T-cell (primary cell): ENCODE measurements at regions of chr17 and their contacts with region 1.

Region 1: GRCh38 chr17:7136266-7136877 is 21.8 kb upstream of the ASGR2 start:
- DNase-seq: peak; percentile 43 to 92 (median 74)
- ATAC-seq: peak in 2 of 4 experiments; percentile 39 to 46
- H3K4me3 ChIP-seq: no peak overlapping the region
- H3K4me3 Mint-ChIP-seq: no peak overlapping the region
- H3K27ac ChIP-seq: no peak overlapping the region
- H3K27ac Mint-ChIP-seq: peak overlapping the region in 1 of 2 donors; percentile 49
- H3K4me1 ChIP-seq: peaks cover 6 to 24% of the 10 kb centered on the region in 2 experiments
- H3K4me1 Mint-ChIP-seq: peaks cover 21 to 24% (median 21%) of the 10 kb centered on the region in 3 donors
- H3K27me3 ChIP-seq: peaks cover 0 to 49% of the 10 kb centered on the region in 2 experiments
- H3K27me3 Mint-ChIP-seq: peaks cover 0 to 10% of the 10 kb centered on the region in 2 donors

Region 2: GRCh38 chr17:6872137-6872808 is 264.1 kb before region 1 on chr17:
- CTCF ChIA-PET with region 1: no interaction called
- POLR2A ChIA-PET with region 1: no interaction called
- DNase-seq: no peak
- ATAC-seq: no peak
- H3K4me3 ChIP-seq: no peak overlapping the region
- H3K4me3 Mint-ChIP-seq: no peak overlapping the region
- H3K27ac ChIP-seq: no peak overlapping the region
- H3K27ac Mint-ChIP-seq: no peak overlapping the region
- H3K4me1 ChIP-seq: no peaks in the 10 kb centered on the region
- H3K4me1 Mint-ChIP-seq: no peaks in the 10 kb centered on the region
- H3K27me3 ChIP-seq: peaks cover 0 to 3% of the 10 kb centered on the region in 2 experiments
- H3K27me3 Mint-ChIP-seq: peaks cover 19 to 23% of the 10 kb centered on the region in 2 donors

Region 3: GRCh38 chr17:7029659-7030058 is 106.7 kb before region 1 on chr17:
- CTCF ChIA-PET with region 1: no interaction called
- POLR2A ChIA-PET with region 1: no interaction called
- DNase-seq: peak in 8 of 35 experiments; percentile 28 to 62 (median 38)
- ATAC-seq: peak; percentile 67 to 89 (median 76)
- H3K4me3 ChIP-seq: peak overlapping the region; percentile 8 to 15
- H3K4me3 Mint-ChIP-seq: peak overlapping the region; percentile 52 to 75 (median 57)
- H3K27ac ChIP-seq: peak overlapping the region; percentile 32
- H3K27ac Mint-ChIP-seq: peak overlapping the region; percentile 75 to 86
- H3K4me1 ChIP-seq: peaks cover 35 to 50% of the 10 kb centered on the region in 2 experiments
- H3K4me1 Mint-ChIP-seq: peaks cover 40 to 57% (median 56%) of the 10 kb centered on the region in 3 donors
- H3K27me3 ChIP-seq: no peaks in the 10 kb centered on the region
- H3K27me3 Mint-ChIP-seq: no peaks in the 10 kb centered on the region

Region 4: GRCh38 chr17:7060165-7060891 is 76.0 kb before region 1 on chr17:
- CTCF ChIA-PET with region 1: interaction called in 1 of 2 experiments, 25 read pairs
- POLR2A ChIA-PET with region 1: no interaction called
- DNase-seq: no peak
- ATAC-seq: peak in 1 of 4 experiments; percentile 43
- H3K4me3 ChIP-seq: no peak overlapping the region
- H3K4me3 Mint-ChIP-seq: no peak overlapping the region
- H3K27ac ChIP-seq: no peak overlapping the region
- H3K27ac Mint-ChIP-seq: no peak overlapping the region
- H3K4me1 ChIP-seq: no peaks in the 10 kb centered on the region
- H3K4me1 Mint-ChIP-seq: peaks cover 5 to 6% (median 5%) of the 10 kb centered on the region in 3 donors
- H3K27me3 ChIP-seq: peaks cover 0 to 12% of the 10 kb centered on the region in 2 experiments
- H3K27me3 Mint-ChIP-seq: peaks cover 15 to 17% of the 10 kb centered on the region in 2 donors

Region 5: GRCh38 chr17:7095625-7096024 is 40.7 kb before region 1 on chr17:
- CTCF ChIA-PET with region 1: no interaction called
- POLR2A ChIA-PET with region 1: no interaction called
- DNase-seq: no peak
- ATAC-seq: no peak
- H3K4me3 ChIP-seq: no peak overlapping the region
- H3K4me3 Mint-ChIP-seq: no peak overlapping the region
- H3K27ac ChIP-seq: no peak overlapping the region
- H3K27ac Mint-ChIP-seq: no peak overlapping the region
- H3K4me1 ChIP-seq: no peaks in the 10 kb centered on the region
- H3K4me1 Mint-ChIP-seq: peaks cover 5 to 15% (median 14%) of the 10 kb centered on the region in 3 donors
- H3K27me3 ChIP-seq: peaks cover 0 to 16% of the 10 kb centered on the region in 2 experiments
- H3K27me3 Mint-ChIP-seq: peaks cover 8 to 16% of the 10 kb centered on the region in 2 donors

Region 6: GRCh38 chr17:7204336-7204735 is 68.0 kb after region 1 on chr17:
- CTCF ChIA-PET with region 1: no interaction called
- POLR2A ChIA-PET with region 1: interaction called in 1 of 2 experiments, 17 read pairs
- DNase-seq: peak in 4 of 35 experiments; percentile 10 to 35 (median 17)
- ATAC-seq: peak in 2 of 4 experiments; percentile 6 to 8
- H3K4me3 ChIP-seq: peak overlapping the region; percentile 66 to 67
- H3K4me3 Mint-ChIP-seq: peak overlapping the region; percentile 74 to 85 (median 80)
- H3K27ac ChIP-seq: peak overlapping the region; percentile 97
- H3K27ac Mint-ChIP-seq: peak overlapping the region; percentile 86 to 93
- H3K4me1 ChIP-seq: peaks cover 8 to 30% of the 10 kb centered on the region in 2 experiments
- H3K4me1 Mint-ChIP-seq: peaks cover 24 to 39% (median 35%) of the 10 kb centered on the region in 3 donors
- H3K27me3 ChIP-seq: peaks cover 0 to 2% of the 10 kb centered on the region in 2 experiments
- H3K27me3 Mint-ChIP-seq: no peaks in the 10 kb centered on the region

Region 7: DNA sequence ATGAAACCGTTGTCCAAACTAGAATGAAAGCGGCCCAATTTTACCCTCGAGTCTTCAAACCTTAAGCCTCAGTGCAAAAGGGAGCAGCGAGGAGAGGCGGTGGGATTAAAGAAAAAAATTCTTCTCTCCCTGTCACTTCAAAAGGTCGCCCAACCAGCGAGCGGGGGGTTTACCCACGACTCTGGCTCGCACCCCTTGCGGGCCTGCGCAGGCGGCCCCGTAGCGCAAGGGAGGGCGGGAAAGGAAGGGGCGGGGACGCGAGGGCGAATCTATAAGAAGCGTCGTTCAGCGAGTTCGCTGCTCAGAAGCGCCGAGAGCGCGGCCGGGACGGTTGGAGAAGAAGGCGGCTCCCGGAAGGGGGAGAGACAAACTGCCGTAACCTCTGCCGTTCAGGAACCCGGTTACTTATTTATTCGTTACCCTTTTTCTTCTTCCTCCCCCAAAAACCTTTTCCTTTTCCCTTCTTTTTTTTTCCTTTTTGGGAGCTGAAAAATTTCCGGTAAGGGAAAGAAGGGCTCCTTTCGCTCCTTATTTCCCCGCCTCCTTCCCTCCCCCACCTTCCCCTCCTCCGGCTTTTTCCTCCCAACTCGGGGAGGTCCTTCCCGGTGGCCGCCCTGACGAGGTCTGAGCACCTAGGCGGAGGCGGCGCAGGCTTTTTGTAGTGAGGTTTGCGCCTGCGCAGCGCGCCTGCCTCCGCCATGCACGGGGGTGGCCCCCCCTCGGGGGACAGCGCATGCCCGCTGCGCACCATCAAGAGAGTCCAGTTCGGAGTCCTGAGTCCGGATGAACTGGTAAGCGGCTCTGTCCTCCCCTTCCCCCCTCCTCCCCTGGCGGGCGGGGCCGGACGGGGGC is 347.9 kb after region 1 on chr17 and contains the start of gene POLR2A:
- CTCF ChIA-PET with region 1: no interaction called
- POLR2A ChIA-PET with region 1: interaction called in 1 of 2 experiments, 12 read pairs
- DNase-seq: peak; percentile 94 to 100 (median 97)
- ATAC-seq: peak; percentile 66 to 73 (median 70)
- H3K4me3 ChIP-seq: peak within 1 kb of the TSS; percentile 92 to 98
- H3K4me3 Mint-ChIP-seq: peak within 1 kb of the TSS; percentile 92 to 99 (median 98)
- H3K27ac ChIP-seq: peak within 1 kb of the TSS; percentile 99
- H3K27ac Mint-ChIP-seq: peak within 1 kb of the TSS; percentile 100
- H3K4me1 ChIP-seq: peaks cover 34 to 72% of the 10 kb centered on the region in 2 experiments
- H3K4me1 Mint-ChIP-seq: peaks cover 75 to 81% (median 77%) of the 10 kb centered on the region in 3 donors
- H3K27me3 ChIP-seq: no peaks in the 10 kb centered on the region
- H3K27me3 Mint-ChIP-seq: no peaks in the 10 kb centered on the region
- total RNA-seq, gene POLR2A: 198 to 444 (median 212) TPM